Mammary epithelial cell (primary cell): ENCODE measurements at regions of chr16 and their contacts with region 1.

Region 1: DNA sequence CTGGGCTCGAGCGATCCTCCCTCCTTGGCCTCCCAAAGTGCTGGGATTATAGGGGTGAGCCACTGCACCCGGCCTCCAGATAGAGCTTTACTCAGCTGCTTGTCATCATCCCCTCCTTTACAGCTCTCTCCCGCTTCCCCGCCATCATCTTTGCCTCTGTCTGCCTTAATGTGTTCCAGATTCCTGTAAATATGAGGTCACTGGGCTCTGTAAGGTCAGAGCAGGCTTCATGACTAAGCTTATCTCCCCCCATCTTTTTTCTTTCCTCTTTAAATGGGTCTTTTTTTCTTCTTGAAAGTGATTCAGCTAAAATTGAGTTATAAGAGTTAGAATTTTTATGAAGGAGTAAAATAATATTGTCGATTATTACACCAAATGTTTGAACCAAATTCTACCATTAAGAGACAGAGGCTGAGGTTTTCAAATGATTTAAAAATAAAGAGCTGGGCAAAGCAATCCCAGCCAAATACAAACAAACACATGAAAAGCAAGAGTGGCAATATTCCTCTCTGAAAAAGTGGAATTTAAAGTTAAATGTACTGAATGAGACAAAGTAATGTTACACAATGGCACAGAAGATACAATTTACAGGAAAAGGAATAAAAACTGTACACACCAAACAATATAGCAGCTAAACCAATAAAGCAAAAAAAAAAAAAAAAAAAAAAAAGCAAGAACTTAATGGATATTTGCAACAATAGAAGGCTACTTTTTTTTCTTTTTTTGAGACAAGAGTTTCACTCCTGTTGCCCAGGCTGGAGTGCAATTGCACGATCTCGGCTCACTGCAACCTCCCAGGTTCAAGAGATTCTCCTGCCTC is 62.1 kb downstream of the CRISPLD2 start:
- DNase-seq: peak; percentile 53
- H3K4me3 ChIP-seq: no peak overlapping the region
- H3K27ac ChIP-seq: no peak overlapping the region
- H3K4me1 ChIP-seq: peaks cover 36% of the 10 kb centered on the region
- H3K27me3 ChIP-seq: no peaks in the 10 kb centered on the region
- CTCF ChIP-seq: no peak

Region 2: GRCh38 chr16:84699712-84700445 is 182.0 kb before region 1 on chr16 and contains the start of gene USP10:
- CTCF ChIA-PET with region 1: no interaction called
- dilution Hi-C with region 1: no loop called
- in situ Hi-C with region 1: no loop called
- intact Hi-C with region 1: no loop called
- DNase-seq: peak; percentile 66
- H3K4me3 ChIP-seq: peak within 1 kb of the TSS; percentile 75 to 90 (median 86)
- H3K27ac ChIP-seq: peak within 1 kb of the TSS; percentile 71
- H3K4me1 ChIP-seq: peaks cover 4% of the 10 kb centered on the region
- H3K27me3 ChIP-seq: no peaks in the 10 kb centered on the region
- CTCF ChIP-seq: no peak
- total RNA-seq, gene USP10: 60.5 to 111 TPM

Region 3: GRCh38 chr16:84841770-84842300 is 40.1 kb before region 1 on chr16:
- CTCF ChIA-PET with region 1: no interaction called
- dilution Hi-C with region 1: no loop called
- in situ Hi-C with region 1: no loop called
- intact Hi-C with region 1: loop called (anchors 2 kb)
- DNase-seq: peak; percentile 62
- H3K4me3 ChIP-seq: peak overlapping the region in 2 of 3 experiments; percentile 32 to 34
- H3K27ac ChIP-seq: no peak overlapping the region
- H3K4me1 ChIP-seq: peaks cover 27% of the 10 kb centered on the region
- H3K27me3 ChIP-seq: no peaks in the 10 kb centered on the region
- CTCF ChIP-seq: no peak

Region 4: DNA sequence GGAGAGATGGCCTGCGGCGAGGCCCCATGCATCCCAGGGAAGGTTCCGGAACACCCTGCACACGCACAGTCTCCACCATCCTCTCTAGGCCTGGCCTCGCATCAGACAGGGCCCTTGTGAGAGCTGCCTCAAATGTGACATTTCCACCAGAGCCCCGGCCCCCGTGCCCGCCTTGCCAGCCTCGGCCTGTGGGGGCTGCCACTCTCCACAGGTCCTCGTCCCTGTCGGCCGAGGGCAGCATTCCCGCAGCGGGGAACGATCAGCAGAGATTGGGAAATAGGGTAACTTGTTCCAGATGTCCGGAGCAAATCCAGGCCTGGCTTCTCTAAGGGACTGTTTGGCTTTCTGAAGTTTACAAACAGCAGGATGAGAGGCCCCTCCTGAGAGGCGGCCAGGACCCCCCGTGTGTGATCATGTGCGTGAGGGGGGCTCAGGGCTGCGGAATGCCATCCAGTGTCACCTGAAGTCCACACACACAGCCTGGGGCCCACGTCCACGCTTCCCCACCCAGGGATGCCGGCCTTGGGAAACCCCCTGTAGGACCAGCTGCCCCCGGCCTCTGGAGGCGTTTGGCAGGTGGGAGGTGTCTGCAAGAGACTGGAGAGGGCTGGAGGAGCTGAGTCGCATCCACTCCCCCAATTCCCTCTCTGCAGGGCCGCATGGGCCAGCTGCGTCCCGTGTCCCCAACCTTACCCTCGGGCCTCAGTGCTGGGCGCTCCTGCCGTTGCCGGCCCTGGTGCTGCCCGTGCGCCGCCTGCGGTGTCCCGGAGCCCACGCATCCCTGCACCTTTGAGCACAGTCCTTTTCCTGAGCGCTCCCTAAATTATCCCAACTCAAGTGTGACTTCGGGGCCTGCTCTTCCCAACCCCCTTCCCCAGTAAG is 59.0 kb after region 1 on chr16:
- CTCF ChIA-PET with region 1: no interaction called
- dilution Hi-C with region 1: loop called (anchors 5 kb)
- in situ Hi-C with region 1: no loop called
- intact Hi-C with region 1: no loop called
- DNase-seq: no peak
- H3K4me3 ChIP-seq: no peak overlapping the region
- H3K27ac ChIP-seq: no peak overlapping the region
- H3K4me1 ChIP-seq: no peaks in the 10 kb centered on the region
- H3K27me3 ChIP-seq: no peaks in the 10 kb centered on the region
- CTCF ChIP-seq: no peak

Region 5: DNA sequence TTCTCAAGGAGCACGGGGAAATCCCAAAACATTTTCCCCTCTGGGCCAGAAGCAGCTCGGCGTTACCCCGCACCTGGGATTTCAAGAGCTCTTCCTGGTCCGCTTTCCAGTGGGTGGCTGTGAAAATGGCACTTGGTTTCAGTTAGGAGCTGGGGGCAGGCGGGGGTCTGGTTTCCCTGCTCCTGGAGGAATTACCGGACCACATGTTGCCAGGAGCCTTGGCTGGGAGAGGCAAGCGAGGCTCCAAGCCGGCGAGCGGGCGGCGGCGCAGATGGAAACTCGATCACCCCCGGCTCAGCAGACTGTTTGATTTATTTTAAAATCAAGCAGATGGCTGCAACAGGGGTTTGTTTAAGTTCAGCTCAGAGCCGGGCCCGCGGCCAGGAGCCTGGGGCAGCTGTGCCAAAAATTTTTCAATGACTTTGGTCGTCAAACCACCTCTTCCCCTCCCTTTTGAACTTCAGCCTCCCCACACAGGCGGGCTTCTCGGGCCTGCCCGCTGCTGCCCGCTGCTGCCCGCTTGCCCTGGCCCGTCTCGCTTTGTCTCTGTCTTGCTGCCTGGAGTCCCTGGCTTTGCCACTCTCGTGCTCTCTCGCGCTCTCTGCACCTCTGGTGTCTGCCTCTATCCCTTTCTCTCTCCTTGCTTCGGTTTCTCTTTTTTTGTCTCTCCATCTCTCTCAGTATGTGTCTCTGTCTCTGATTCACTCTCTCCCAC is 338.4 kb after region 1 on chr16:
- CTCF ChIA-PET with region 1: no interaction called
- dilution Hi-C with region 1: no loop called
- in situ Hi-C with region 1: no loop called
- intact Hi-C with region 1: no loop called
- DNase-seq: peak; percentile 76
- H3K4me3 ChIP-seq: peak overlapping the region; percentile 16 to 38 (median 23)
- H3K27ac ChIP-seq: peak overlapping the region; percentile 68
- H3K4me1 ChIP-seq: peaks cover 14% of the 10 kb centered on the region
- H3K27me3 ChIP-seq: no peaks in the 10 kb centered on the region
- CTCF ChIP-seq: peak in 1 of 2 donors; percentile 10